B cell (primary cell): ENCODE measurements at regions of chr2 and their contacts with region 1.

Region 1: DNA sequence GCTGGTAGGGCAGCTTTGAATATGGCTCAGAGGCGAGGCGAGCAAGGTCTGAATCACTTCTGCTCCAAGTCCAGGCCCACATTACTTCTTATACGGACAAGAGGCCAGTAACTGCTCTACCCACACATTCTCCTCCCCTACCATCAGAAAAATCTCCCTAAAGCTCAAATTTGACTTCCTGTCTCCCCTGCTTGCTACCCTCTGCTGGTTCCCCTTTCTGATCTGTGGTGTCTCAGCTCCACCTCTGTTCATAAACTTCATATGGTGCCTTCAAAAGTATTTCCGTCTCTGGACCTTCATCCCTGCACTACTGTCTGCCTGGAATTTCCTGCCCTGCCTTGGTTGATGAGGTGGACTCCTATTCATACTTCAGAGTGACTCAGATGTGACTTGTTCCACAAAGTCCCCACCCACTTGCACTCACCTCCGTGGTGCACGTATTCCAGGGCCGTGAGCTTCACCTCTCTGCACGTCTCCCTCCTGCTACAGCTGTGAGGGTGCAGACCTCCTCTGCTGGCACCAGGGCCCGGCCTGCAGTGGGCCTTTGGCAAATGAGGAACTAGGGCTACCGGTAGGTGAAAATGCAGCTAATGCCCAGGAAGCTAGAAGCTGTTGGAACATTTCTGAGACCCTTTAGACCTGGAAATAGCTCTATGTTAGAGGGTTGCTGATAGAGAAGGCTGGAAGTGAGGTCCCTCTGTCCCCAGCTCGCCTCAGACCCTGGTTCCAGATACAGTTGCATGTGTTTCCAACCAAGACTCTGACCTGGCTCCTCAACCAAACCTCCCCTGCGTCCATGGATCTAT is 24.6 kb upstream of the KCMF1 start:
- DNase-seq: peak; percentile 83
- ATAC-seq: peak; percentile 86
- H3K4me3 ChIP-seq: peak overlapping the region in 4 of 5 experiments; percentile 14 to 48 (median 32)
- H3K4me3 Mint-ChIP-seq: peak overlapping the region; percentile 79
- H3K27ac ChIP-seq: peak overlapping the region; percentile 78 to 87
- H3K27ac Mint-ChIP-seq: peak overlapping the region; percentile 93
- H3K4me1 ChIP-seq: peaks cover 44 to 55% of the 10 kb centered on the region in 2 donors
- H3K4me1 Mint-ChIP-seq: peaks cover 45% of the 10 kb centered on the region
- H3K27me3 ChIP-seq: no peaks in the 10 kb centered on the region
- H3K27me3 Mint-ChIP-seq: no peaks in the 10 kb centered on the region
- CTCF ChIP-seq: no peak

Region 2: GRCh38 chr2:84649487-84650142 is 296.8 kb before region 1 on chr2:
- CTCF ChIA-PET with region 1: no interaction called
- POLR2A ChIA-PET with region 1: no interaction called
- intact Hi-C with region 1: no loop called
- DNase-seq: no peak
- ATAC-seq: no peak
- H3K4me3 ChIP-seq: no peak overlapping the region
- H3K4me3 Mint-ChIP-seq: no peak overlapping the region
- H3K27ac ChIP-seq: no peak overlapping the region
- H3K27ac Mint-ChIP-seq: no peak overlapping the region
- H3K4me1 ChIP-seq: no peaks in the 10 kb centered on the region
- H3K4me1 Mint-ChIP-seq: no peaks in the 10 kb centered on the region
- H3K27me3 ChIP-seq: no peaks in the 10 kb centered on the region
- H3K27me3 Mint-ChIP-seq: peaks cover 13% of the 10 kb centered on the region
- CTCF ChIP-seq: no peak

Region 3: DNA sequence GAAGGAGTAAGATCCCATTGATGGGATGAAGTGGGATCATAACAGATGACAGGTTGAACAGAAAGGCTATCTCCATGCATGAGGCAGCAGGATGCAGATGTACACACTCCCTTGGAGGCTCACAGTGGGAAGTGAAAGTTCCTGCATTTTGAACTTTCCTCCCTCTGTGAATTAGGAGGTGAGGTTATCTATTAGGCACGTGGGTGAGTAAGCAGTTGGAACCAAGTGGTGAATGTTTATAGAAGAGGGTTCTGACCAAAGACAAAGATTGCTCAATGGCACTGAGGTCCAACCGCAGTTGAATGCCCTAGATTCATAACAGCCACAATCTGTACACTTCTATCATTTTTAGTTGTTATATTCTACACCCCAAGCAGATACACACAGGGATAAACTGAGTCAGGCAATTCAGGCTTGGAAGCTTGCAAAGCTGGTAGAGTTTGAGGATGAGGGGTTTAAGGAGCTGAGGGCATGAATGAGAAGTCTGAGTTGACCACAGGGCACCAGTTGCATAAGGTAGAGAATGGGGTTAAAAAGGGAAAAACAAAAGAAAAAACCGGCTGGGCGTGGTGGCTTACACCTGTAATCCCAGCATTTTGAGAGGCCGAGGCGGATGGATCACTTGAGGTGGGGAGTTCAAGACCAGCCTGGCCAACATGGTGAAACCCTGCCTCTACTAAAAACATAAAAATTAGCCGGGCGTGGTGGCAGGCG is 17.4 kb after region 1 on chr2:
- CTCF ChIA-PET with region 1: interaction called, 42 read pairs
- POLR2A ChIA-PET with region 1: interaction called, 39 read pairs
- intact Hi-C with region 1: loop called (anchors 1 kb)
- DNase-seq: no peak
- ATAC-seq: no peak
- H3K4me3 ChIP-seq: no peak overlapping the region
- H3K4me3 Mint-ChIP-seq: no peak overlapping the region
- H3K27ac ChIP-seq: no peak overlapping the region
- H3K27ac Mint-ChIP-seq: peak overlapping the region; percentile 82
- H3K4me1 ChIP-seq: peaks cover 47 to 64% of the 10 kb centered on the region in 2 donors
- H3K4me1 Mint-ChIP-seq: peaks cover 62% of the 10 kb centered on the region
- H3K27me3 ChIP-seq: no peaks in the 10 kb centered on the region
- H3K27me3 Mint-ChIP-seq: no peaks in the 10 kb centered on the region
- CTCF ChIP-seq: no peak

Region 4: DNA sequence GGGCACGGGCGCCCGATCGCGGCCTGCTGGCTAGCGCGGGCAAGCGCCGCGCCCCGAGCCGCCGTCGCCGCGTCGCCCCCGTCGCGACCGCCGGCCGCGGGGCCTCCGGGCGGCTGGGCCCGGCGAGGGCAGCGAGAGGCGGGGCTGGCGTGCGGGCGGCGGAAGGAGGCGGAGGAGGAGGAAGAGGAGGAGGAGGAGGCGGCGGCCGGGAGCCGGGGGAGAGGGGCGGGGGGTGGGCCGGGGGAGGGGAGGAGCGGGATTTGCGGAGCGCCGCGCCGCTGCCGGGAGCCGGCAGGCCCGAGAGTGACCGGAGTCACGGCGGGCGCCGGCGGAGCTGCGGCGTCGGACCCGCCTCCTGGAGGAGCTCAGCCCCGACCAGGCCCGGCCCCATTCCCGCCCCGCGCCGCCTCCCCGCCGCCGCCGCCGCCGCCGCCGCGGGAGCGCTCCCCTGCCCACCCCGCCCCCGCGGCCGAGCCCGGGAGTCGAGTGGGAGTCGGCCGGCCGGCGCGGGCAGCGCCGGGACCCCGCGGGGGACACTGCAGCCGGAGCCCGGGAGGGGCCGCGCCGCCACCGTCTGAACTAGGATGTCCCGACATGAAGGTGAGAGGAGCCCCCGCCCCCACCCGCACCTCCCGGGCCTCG is 24.6 kb after region 1 on chr2 and contains the start of gene KCMF1:
- CTCF ChIA-PET with region 1: interaction called, 42 read pairs
- POLR2A ChIA-PET with region 1: interaction called, 39 read pairs
- intact Hi-C with region 1: loop called (anchors 1 kb)
- DNase-seq: no peak
- ATAC-seq: peak; percentile 56
- H3K4me3 ChIP-seq: peak within 1 kb of the TSS; percentile 85 to 97 (median 92)
- H3K4me3 Mint-ChIP-seq: peak within 1 kb of the TSS; percentile 98
- H3K27ac ChIP-seq: peak within 1 kb of the TSS; percentile 74 to 96
- H3K27ac Mint-ChIP-seq: peak within 1 kb of the TSS; percentile 97
- H3K4me1 ChIP-seq: peaks cover 42 to 48% of the 10 kb centered on the region in 2 donors
- H3K4me1 Mint-ChIP-seq: peaks cover 56% of the 10 kb centered on the region
- H3K27me3 ChIP-seq: no peaks in the 10 kb centered on the region
- H3K27me3 Mint-ChIP-seq: no peaks in the 10 kb centered on the region
- CTCF ChIP-seq: no peak
- total RNA-seq, gene KCMF1: 73.1 and 81.5 TPM in 2 replicates

Region 5: GRCh38 chr2:85017411-85018048 is 71.1 kb after region 1 on chr2:
- CTCF ChIA-PET with region 1: interaction called, 10 read pairs
- POLR2A ChIA-PET with region 1: no interaction called
- intact Hi-C with region 1: no loop called
- DNase-seq: no peak
- ATAC-seq: no peak
- H3K4me3 ChIP-seq: no peak overlapping the region
- H3K4me3 Mint-ChIP-seq: no peak overlapping the region
- H3K27ac ChIP-seq: no peak overlapping the region
- H3K27ac Mint-ChIP-seq: peak overlapping the region; percentile 37
- H3K4me1 ChIP-seq: peaks cover 26 to 37% of the 10 kb centered on the region in 2 donors
- H3K4me1 Mint-ChIP-seq: peaks cover 61% of the 10 kb centered on the region
- H3K27me3 ChIP-seq: no peaks in the 10 kb centered on the region
- H3K27me3 Mint-ChIP-seq: no peaks in the 10 kb centered on the region
- CTCF ChIP-seq: peak; percentile 61

Region 6: DNA sequence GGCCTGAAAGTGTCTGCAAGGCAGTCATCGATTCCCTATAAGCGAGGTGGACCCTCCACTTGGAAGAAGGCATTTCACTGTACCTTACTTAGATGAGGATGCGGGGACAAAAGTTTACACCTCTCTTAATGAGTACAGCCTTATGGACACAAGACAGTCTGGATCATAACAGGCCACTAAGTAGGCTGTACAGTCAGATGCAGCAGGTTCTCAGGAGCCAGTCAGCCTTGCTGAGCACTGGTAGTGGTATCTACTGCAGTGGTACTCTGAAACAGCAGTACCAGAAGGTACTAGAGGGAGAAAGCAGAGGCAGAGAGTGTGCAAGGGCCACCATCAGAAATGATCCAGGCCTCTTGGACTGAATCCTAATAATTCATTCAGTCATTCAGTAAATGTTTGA is 102.1 kb after region 1 on chr2:
- CTCF ChIA-PET with region 1: no interaction called
- POLR2A ChIA-PET with region 1: no interaction called
- intact Hi-C with region 1: no loop called
- DNase-seq: no peak
- ATAC-seq: no peak
- H3K4me3 ChIP-seq: no peak overlapping the region
- H3K4me3 Mint-ChIP-seq: no peak overlapping the region
- H3K27ac ChIP-seq: no peak overlapping the region
- H3K27ac Mint-ChIP-seq: no peak overlapping the region
- H3K4me1 ChIP-seq: no peaks in the 10 kb centered on the region
- H3K4me1 Mint-ChIP-seq: no peaks in the 10 kb centered on the region
- H3K27me3 ChIP-seq: no peaks in the 10 kb centered on the region
- H3K27me3 Mint-ChIP-seq: no peaks in the 10 kb centered on the region
- CTCF ChIP-seq: no peak

Region 7: GRCh38 chr2:85132834-85133637 is 186.6 kb after region 1 on chr2 and contains the start of gene TCF7L1:
- CTCF ChIA-PET with region 1: no interaction called
- POLR2A ChIA-PET with region 1: no interaction called
- intact Hi-C with region 1: no loop called
- DNase-seq: peak; percentile 53
- ATAC-seq: peak; percentile 65
- H3K4me3 ChIP-seq: peak within 1 kb of the TSS in 4 of 5 experiments; percentile 21 to 60 (median 47)
- H3K4me3 Mint-ChIP-seq: peak within 1 kb of the TSS; percentile 80
- H3K27ac ChIP-seq: no peak within 1 kb of the TSS
- H3K27ac Mint-ChIP-seq: peak within 1 kb of the TSS; percentile 26
- H3K4me1 ChIP-seq: peaks cover 19 to 21% of the 10 kb centered on the region in 2 donors
- H3K4me1 Mint-ChIP-seq: peaks cover 16% of the 10 kb centered on the region
- H3K27me3 ChIP-seq: peaks cover 0 to 53% (median 22%) of the 10 kb centered on the region in 4 experiments
- H3K27me3 Mint-ChIP-seq: peaks cover 48% of the 10 kb centered on the region
- CTCF ChIP-seq: no peak
- total RNA-seq, gene TCF7L1: 0.53 and 0.67 TPM in 2 replicates

Region 8: DNA sequence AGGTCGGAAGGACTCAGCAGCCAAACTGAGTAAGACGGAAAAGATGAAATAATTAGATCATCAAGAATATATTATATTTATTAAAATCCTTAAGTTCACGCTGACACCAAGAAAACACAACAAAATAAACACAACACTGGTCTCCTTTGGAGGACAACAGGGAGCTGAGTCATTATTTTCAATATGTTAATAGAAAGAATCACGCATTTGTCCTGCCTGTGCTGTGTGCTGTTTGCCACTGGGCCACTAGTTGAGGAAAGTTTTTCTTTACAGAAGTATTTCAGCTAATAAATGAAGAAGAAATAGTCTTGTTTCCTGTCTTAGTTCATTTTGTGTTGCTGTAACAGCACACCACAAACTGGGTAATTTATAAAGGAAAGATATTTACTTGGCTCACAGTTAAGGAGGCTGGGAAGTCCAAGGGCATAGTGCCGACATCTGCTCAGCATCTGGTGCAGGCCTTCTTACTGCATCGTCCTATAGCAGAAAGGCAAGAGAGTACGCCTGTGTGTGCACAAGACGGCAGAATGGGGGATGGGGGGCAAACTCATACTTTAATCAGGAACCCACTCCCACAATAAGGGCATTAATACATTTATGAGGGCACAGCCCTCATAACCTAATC is 274.8 kb after region 1 on chr2:
- CTCF ChIA-PET with region 1: no interaction called
- POLR2A ChIA-PET with region 1: no interaction called
- intact Hi-C with region 1: no loop called
- DNase-seq: no peak
- ATAC-seq: no peak
- H3K4me3 ChIP-seq: no peak overlapping the region
- H3K4me3 Mint-ChIP-seq: no peak overlapping the region
- H3K27ac ChIP-seq: no peak overlapping the region
- H3K27ac Mint-ChIP-seq: no peak overlapping the region
- H3K4me1 ChIP-seq: no peaks in the 10 kb centered on the region
- H3K4me1 Mint-ChIP-seq: no peaks in the 10 kb centered on the region
- H3K27me3 ChIP-seq: peaks cover 0 to 8% (median 0%) of the 10 kb centered on the region in 4 experiments
- H3K27me3 Mint-ChIP-seq: peaks cover 32% of the 10 kb centered on the region
- CTCF ChIP-seq: no peak